ENCODE measurements at regions of chr17 and their contacts with region 1.

Region 1: DNA sequence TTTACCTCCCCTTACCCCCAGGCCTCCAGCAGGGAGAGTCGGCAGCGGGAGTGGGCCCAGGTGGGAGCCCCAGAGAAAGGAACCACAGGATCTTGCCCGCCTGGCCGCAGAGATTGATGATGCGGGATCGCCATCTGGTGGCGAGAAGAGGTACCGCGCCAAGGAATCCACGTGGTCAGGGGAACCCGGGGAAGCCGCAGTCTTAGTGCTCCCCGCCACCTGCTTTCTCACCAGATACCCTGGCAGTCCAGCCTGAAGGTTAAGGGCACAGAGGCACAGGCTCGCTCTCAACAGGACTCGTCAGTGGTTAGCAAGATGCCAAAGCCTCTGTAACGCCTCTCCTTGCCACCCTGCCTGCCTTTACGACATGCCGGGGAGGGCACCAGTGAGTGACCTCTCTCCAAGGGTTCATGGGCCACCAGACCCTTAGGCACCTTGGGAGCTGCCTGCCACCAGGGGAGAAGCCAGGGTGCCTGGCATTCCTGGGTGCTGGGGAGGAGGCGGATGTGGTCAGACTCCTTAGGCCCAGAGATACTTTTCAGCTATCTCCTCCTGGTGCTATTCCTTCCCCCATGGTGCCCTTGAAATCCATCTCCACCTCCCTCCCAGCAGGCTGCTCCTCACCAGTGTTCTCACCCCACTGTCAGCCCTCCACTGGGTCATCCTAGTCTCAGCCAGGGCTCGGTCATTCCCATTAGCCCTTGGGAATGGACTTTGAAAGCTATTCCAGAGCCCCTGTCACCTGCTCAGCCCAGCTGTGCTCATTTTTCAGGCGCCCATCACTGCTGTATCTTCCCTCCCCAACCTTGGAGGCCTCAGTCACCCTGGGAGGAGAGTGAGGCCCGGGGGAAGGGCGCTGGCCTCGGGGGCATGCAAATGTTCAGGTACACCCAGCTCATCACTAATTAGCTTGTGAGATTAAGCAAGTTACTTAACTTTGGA is 5.5 kb upstream of the RHBDF2 start:
- DNase-seq: peak; percentile 67 to 95 (median 87)
- ATAC-seq: peak; percentile 39 to 83 (median 70)
- H3K4me3 ChIP-seq: no peak overlapping the region
- H3K27ac ChIP-seq: no peak overlapping the region
- H3K4me1 ChIP-seq: peaks cover 12 to 15% (median 13%) of the 10 kb centered on the region in 3 donors
- H3K27me3 ChIP-seq: no peaks in the 10 kb centered on the region
- CTCF ChIP-seq: peak; percentile 87 to 94 (median 91)

Region 2: DNA sequence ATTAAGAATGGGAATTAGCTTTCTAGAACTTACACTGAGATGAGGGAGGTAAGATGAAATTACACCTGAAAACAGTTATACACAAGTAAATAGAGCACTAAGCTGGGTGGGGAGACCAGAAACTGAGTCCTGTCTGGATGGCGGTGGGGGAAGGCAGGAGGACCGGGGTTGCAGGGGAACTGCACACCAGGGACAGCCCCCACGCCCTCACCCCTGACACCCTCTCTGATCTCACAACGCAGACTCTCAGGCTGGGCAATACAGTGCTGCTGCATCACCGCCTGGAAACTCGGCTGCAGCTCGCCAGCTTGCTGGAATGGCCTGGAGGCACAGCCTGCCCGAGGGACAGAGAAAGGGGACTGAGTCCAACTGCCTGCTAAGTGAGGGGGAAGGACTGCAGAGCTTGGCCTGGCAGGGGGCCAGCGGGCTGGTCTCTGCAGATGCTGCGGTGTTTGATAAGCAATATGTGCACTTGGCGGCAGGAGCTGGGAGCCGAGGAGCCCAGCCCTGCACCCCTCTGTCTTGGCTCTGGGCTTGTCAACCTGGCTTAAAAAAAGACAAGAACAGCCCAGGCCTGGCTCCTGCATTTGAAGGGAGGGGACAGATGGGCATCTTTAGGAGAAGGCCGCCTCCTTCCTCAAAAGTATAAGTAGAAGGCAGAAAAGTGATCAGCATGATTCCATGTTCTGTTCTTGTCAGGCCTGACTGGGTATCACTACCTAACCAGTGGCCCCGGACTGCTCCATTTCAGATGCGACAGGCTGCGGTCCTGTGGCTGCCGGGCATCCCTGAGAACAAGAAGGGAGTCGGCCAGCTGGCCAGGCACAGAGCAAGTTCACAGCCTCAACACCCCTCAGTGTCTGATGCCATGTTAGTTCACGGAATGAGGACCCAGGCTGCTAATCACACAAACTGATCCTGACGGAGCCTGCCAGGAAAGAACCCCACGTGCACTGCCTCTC is 92.1 kb before region 1 on chr17:
- intact Hi-C with region 1: loop called in 2 of 3 experiments (anchors 5 to 10 kb)
- DNase-seq: peak; percentile 45 to 91 (median 62)
- ATAC-seq: peak; percentile 53 to 81 (median 73)
- H3K4me3 ChIP-seq: no peak overlapping the region
- H3K27ac ChIP-seq: no peak overlapping the region
- H3K4me1 ChIP-seq: peaks cover 0 to 2% (median 0%) of the 10 kb centered on the region in 3 donors
- H3K27me3 ChIP-seq: no peaks in the 10 kb centered on the region
- CTCF ChIP-seq: no peak

Region 3: DNA sequence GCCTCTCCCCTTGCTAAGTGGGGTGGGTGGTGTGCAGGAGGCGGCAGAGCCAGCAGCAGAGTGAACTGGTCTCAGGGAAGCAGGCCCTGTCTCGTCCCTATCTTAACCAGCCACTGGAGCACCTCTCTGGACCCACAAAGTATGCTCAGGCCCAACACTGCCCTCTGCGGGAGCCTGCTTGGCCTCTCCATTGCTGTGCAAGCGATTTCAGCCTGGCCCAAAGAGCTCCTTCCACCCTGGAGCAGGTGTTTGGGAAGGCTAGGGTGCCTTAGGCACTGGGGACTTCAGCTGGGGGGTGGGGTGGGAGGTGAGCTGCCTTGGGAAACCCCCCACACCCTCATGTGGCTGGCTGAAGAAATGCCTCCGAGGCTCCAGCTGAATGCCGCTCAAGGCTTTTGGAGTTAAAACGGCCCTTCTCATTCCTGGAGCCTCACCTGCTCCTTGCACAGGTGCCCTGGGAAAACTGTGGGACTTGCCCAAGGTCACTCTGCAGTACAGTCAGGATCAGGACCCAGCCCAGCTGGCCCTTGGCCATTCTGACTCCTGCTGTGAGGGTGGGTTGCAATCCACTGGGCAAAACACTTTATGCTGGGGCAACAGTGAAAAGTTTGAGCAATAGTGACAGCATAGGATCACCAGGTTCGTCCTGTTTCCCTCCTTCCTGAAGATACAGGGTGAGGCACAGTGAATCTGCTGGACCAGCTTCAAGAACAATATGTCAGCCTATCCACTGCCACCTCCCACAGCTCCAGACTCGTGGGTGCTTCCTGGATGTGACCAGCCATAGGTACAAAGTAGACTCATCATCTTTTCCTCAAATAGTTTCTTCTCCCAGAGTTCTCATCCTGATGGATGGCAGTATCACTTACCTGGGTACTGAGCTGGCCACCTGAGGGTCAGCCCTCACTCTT is 47.8 kb before region 1 on chr17:
- intact Hi-C with region 1: loop called in 1 of 3 experiments (anchors 2 kb)
- DNase-seq: peak; percentile 52 to 82 (median 64)
- ATAC-seq: peak; percentile 77 to 92 (median 87)
- H3K4me3 ChIP-seq: no peak overlapping the region
- H3K27ac ChIP-seq: no peak overlapping the region
- H3K4me1 ChIP-seq: no peaks in the 10 kb centered on the region
- H3K27me3 ChIP-seq: no peaks in the 10 kb centered on the region
- CTCF ChIP-seq: peak in 1 of 4 donors; percentile 22

Region 4: GRCh38 chr17:76467366-76467765 is 39.3 kb before region 1 on chr17 and contains the start of gene AANAT:
- intact Hi-C with region 1: loop called (anchors 2 to 5 kb)
- DNase-seq: peak in 1 of 6 donors; percentile 44
- ATAC-seq: no peak
- H3K4me3 ChIP-seq: no peak within 1 kb of the TSS
- H3K27ac ChIP-seq: no peak within 1 kb of the TSS
- H3K4me1 ChIP-seq: peaks cover 0 to 3% (median 0%) of the 10 kb centered on the region in 3 donors
- H3K27me3 ChIP-seq: no peaks in the 10 kb centered on the region
- CTCF ChIP-seq: no peak
- total RNA-seq, gene AANAT: 0.16 TPM in 1 of 6 donors, not detected in the others

Region 5: GRCh38 chr17:76473541-76473985 is 33.1 kb before region 1 on chr17:
- intact Hi-C with region 1: loop called in 1 of 3 experiments (anchors 5 kb)
- DNase-seq: peak in 2 of 6 donors; percentile 23 to 70
- ATAC-seq: peak in 2 of 4 donors; percentile 4 to 6
- H3K4me3 ChIP-seq: no peak overlapping the region
- H3K27ac ChIP-seq: no peak overlapping the region
- H3K4me1 ChIP-seq: no peaks in the 10 kb centered on the region
- H3K27me3 ChIP-seq: no peaks in the 10 kb centered on the region
- CTCF ChIP-seq: no peak

Measured in pancreas (tissue), 10 donors.